GM12878 (cell line): ENCODE measurements at regions of chr4 and their contacts with region 1.

Region 1: GRCh38 chr4:168318266-168318895 is at the start of gene DDX60:
- DNase-seq: peak; percentile 68
- ATAC-seq: peak; percentile 97
- H3K4me3 ChIP-seq: peak within 1 kb of the TSS; percentile 84
- H3K27ac ChIP-seq: peak within 1 kb of the TSS; percentile 89
- H3K4me1 ChIP-seq: peaks cover 3% of the 10 kb centered on the region; the same call in 1 of the 2 replicates
- H3K27me3 ChIP-seq: no peaks in the 10 kb centered on the region
- CTCF ChIP-seq: peak in 1 of 3 experiments; percentile 43; a peak in 2 of 6 replicates
- EP300 ChIP-seq: peak; percentile 34 to 57; a peak in 2 of 4 replicates
- POLR2A ChIP-seq: peak; percentile 91
- RAD21 ChIP-seq: no peak
- polyA plus RNA-seq, gene DDX60: 3.0 to 3.4 TPM

Region 2: GRCh38 chr4:168269896-168270295 is 48.5 kb before region 1 on chr4:
- CTCF ChIA-PET with region 1: no interaction called
- POLR2A ChIA-PET with region 1: no interaction called
- RAD21 ChIA-PET with region 1: no interaction called
- SMC1A ChIA-PET with region 1: no interaction called
- in situ Hi-C with region 1: no loop called
- intact Hi-C with region 1: no loop called
- DNase-seq: no peak
- ATAC-seq: no peak
- H3K4me3 ChIP-seq: no peak overlapping the region
- H3K27ac ChIP-seq: no peak overlapping the region
- H3K4me1 ChIP-seq: no peaks in the 10 kb centered on the region
- H3K27me3 ChIP-seq: no peaks in the 10 kb centered on the region
- CTCF ChIP-seq: no peak
- EP300 ChIP-seq: no peak
- POLR2A ChIP-seq: no peak
- RAD21 ChIP-seq: no peak

Region 3: GRCh38 chr4:168304744-168305459 is 13.5 kb before region 1 on chr4:
- CTCF ChIA-PET with region 1: interaction called, 6 read pairs
- POLR2A ChIA-PET with region 1: no interaction called
- RAD21 ChIA-PET with region 1: interaction called, 4 read pairs
- SMC1A ChIA-PET with region 1: interaction called, 15 read pairs
- in situ Hi-C with region 1: no loop called
- intact Hi-C with region 1: no loop called
- DNase-seq: no peak
- ATAC-seq: no peak
- H3K4me3 ChIP-seq: no peak overlapping the region
- H3K27ac ChIP-seq: no peak overlapping the region
- H3K4me1 ChIP-seq: no peaks in the 10 kb centered on the region
- H3K27me3 ChIP-seq: no peaks in the 10 kb centered on the region
- CTCF ChIP-seq: no peak
- EP300 ChIP-seq: no peak
- POLR2A ChIP-seq: no peak
- RAD21 ChIP-seq: no peak

Region 4: GRCh38 chr4:168480931-168481611 is 162.7 kb after region 1 on chr4:
- CTCF ChIA-PET with region 1: interaction called, 3 read pairs
- POLR2A ChIA-PET with region 1: interaction called, 3 read pairs
- RAD21 ChIA-PET with region 1: interaction called, 3 read pairs
- SMC1A ChIA-PET with region 1: interaction called, 5 read pairs
- in situ Hi-C with region 1: no loop called
- intact Hi-C with region 1: loop called (anchors 5 kb)
- DNase-seq: peak; percentile 16
- ATAC-seq: peak; percentile 60
- H3K4me3 ChIP-seq: peak overlapping the region; percentile 86; the same call in 1 of the 2 replicates
- H3K27ac ChIP-seq: no peak overlapping the region
- H3K4me1 ChIP-seq: peaks cover 6% of the 10 kb centered on the region; the same call in 1 of the 2 replicates
- H3K27me3 ChIP-seq: no peaks in the 10 kb centered on the region; a peak in 2 of 4 replicates
- CTCF ChIP-seq: no peak
- EP300 ChIP-seq: no peak
- POLR2A ChIP-seq: no peak
- RAD21 ChIP-seq: no peak

Region 5: GRCh38 chr4:168656055-168656660 is 337.8 kb after region 1 on chr4:
- CTCF ChIA-PET with region 1: no interaction called
- POLR2A ChIA-PET with region 1: no interaction called
- RAD21 ChIA-PET with region 1: no interaction called
- SMC1A ChIA-PET with region 1: no interaction called
- in situ Hi-C with region 1: no loop called
- intact Hi-C with region 1: loop called (anchors 10 kb)
- DNase-seq: no peak
- ATAC-seq: no peak
- H3K4me3 ChIP-seq: no peak overlapping the region
- H3K27ac ChIP-seq: no peak overlapping the region
- H3K4me1 ChIP-seq: no peaks in the 10 kb centered on the region
- H3K27me3 ChIP-seq: no peaks in the 10 kb centered on the region; a peak in 1 of 4 replicates
- CTCF ChIP-seq: no peak
- EP300 ChIP-seq: no peak
- POLR2A ChIP-seq: no peak
- RAD21 ChIP-seq: no peak